ENCODE measurements at regions of chr11 and their contacts with region 1.

Region 1: GRCh38 chr11:112289588-112290492 is 29.2 kb upstream of the PLET1 start:
- DNase-seq: peak; percentile 94
- ATAC-seq: peak; percentile 93

Region 2: DNA sequence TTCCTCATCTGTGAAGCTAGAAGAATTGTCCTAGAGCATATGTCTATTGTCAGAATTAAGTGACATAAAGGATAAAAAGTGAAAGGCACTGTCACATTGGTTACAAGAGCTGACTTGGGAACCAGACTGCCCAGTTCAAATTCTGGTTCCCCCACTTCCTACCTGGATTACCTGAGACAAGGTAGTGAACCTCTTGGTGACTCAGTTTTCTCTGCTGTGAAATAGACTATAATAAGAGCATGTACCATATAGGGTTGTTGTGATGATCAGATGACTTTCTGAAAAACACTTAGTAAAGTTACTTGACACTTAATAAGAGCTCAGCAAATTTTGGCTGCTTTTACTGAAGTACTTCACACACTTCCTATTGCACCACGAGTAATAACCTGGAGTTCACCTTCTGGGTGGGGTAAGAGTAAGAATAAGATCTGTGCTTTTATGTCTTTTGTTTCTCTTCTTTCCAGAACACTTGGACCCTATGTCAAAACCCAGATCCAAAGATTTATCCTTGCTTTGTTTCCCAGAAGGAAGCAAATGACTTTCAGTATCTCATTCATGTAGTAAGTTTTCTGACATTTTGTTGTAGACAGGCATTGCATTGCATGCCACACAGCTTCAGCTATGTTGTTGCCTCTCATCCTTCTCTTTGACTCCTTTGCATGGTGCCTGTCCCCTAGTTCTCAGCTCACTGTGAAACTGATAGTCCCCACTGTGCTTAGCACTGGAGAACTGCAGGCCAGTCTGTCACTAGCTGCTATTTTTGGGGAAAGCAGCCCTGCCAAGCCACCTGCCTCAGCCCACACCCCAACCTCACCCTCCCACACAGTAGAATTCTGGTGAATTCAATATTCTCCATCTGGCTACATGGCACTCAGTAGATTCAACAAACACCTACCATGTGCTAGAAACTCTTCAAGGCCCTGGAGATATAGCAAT is 1166.1 kb before region 1 on chr11:
- intact Hi-C with region 1: no loop called
- DNase-seq: no peak
- ATAC-seq: peak; percentile 42

Region 3: GRCh38 chr11:112453601-112454577 is 164.0 kb after region 1 on chr11:
- intact Hi-C with region 1: loop called (anchors 5 kb)
- DNase-seq: no peak
- ATAC-seq: no peak

Region 4: DNA sequence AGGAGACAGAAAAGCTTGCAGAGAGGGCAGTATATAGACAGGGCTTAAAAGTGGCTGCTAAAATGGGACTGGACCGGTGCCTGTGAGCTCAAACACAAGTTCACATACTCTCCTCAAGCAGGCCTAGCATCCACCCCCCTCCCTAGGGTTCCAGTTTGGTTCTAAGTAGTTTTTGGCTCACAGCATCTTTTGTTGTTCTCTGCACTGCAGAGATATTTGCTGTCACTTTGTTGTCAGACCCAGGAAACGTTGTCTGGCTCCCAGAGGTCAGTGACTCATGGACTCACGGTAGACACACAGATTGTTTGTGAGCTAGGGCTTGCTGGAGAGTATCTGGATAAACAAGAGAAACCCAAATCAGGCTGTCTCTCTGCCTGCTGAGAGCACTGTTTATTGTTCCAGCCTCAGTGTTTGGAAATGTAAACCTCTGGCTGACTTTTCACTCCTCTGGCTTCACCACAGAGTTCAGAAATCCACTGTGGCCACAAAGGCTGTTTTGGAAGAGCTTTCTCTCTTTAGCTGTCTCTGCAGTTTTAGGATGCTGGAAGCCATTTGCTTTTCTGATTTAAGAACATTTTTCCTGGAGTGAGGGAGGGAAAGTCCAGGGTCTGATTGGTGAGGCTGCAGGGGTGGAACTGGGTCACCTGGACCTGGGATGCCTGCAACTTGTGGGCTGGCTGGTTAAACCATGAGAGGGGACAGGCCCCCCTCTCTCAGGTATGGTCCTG is 274.6 kb after region 1 on chr11:
- intact Hi-C with region 1: loop called (anchors 1 kb)
- DNase-seq: peak; percentile 58
- ATAC-seq: peak; percentile 89

Region 5: DNA sequence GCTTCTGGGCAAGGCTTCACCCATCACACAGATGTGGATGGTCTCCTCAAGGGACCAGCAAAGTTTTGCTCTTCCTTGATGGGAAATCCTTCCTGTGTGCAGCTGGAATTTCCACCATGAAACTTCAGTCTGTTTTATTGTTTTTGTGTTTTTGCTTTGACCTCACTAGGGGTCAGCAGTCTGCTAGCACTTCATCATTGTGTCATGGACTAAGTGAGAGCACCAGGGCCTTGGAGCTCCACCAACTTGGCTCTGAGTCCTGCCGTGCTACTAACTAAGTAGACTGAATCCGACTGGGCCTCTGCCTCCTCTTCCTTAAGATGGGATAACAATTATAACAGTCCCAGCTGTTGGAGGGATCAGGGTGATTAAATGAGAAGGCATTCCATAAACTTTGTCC is 365.5 kb after region 1 on chr11:
- intact Hi-C with region 1: loop called (anchors 10 kb)
- DNase-seq: peak; percentile 91
- ATAC-seq: peak; percentile 78